ENCODE measurements at regions of chr3 and their contacts with region 1.

Region 1: DNA sequence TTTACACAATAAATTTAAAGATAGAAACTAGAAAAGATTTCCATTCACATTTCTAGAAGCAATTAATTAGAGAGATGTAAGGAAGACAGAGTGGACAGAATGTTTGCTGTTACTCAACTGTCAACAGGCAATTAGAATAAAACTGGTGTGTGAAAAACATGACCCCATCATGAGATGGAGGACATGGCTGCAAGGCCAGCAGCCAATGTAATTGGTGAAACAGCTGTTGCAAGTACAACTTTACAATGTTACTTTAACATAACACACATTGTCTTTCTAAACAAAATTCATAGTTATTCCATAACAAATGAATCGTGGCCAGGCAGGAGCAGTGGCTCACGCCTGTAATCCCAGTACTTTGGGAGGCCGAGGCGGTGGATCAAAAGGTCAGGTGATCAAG is 28.6 kb upstream of the STAG1 start:
- DNase-seq: no peak
- ATAC-seq: no peak
- H3K4me3 ChIP-seq: no peak overlapping the region
- H3K27ac ChIP-seq: no peak overlapping the region
- H3K4me1 ChIP-seq: peaks cover 2% of the 10 kb centered on the region; the same call in 1 of the 2 replicates
- H3K27me3 ChIP-seq: no peaks in the 10 kb centered on the region
- CTCF ChIP-seq: no peak

Region 2: GRCh38 chr3:136444581-136444980 is 336.2 kb before region 1 on chr3:
- CTCF ChIA-PET with region 1: interaction called, 13 read pairs
- POLR2A ChIA-PET with region 1: no interaction called
- in situ Hi-C with region 1: no loop called
- intact Hi-C with region 1: no loop called
- DNase-seq: no peak
- ATAC-seq: no peak
- H3K4me3 ChIP-seq: no peak overlapping the region
- H3K27ac ChIP-seq: no peak overlapping the region
- H3K4me1 ChIP-seq: no peaks in the 10 kb centered on the region
- H3K27me3 ChIP-seq: no peaks in the 10 kb centered on the region
- CTCF ChIP-seq: no peak

Region 3: GRCh38 chr3:136624894-136625815 is 155.6 kb before region 1 on chr3:
- CTCF ChIA-PET with region 1: no interaction called
- POLR2A ChIA-PET with region 1: no interaction called
- in situ Hi-C with region 1: no loop called
- intact Hi-C with region 1: no loop called
- DNase-seq: no peak
- ATAC-seq: peak; percentile 77
- H3K4me3 ChIP-seq: no peak overlapping the region
- H3K27ac ChIP-seq: 0 out of 2 replicates have a peak overlapping the region, but pooled peaks have one; percentile 4
- H3K4me1 ChIP-seq: peaks cover 8% of the 10 kb centered on the region; the same call in 1 of the 2 replicates
- H3K27me3 ChIP-seq: no peaks in the 10 kb centered on the region
- CTCF ChIP-seq: no peak

Measured in Panc1 (cell line).